ENCODE measurements at regions of chr11 and their contacts with region 1.

Region 1: DNA sequence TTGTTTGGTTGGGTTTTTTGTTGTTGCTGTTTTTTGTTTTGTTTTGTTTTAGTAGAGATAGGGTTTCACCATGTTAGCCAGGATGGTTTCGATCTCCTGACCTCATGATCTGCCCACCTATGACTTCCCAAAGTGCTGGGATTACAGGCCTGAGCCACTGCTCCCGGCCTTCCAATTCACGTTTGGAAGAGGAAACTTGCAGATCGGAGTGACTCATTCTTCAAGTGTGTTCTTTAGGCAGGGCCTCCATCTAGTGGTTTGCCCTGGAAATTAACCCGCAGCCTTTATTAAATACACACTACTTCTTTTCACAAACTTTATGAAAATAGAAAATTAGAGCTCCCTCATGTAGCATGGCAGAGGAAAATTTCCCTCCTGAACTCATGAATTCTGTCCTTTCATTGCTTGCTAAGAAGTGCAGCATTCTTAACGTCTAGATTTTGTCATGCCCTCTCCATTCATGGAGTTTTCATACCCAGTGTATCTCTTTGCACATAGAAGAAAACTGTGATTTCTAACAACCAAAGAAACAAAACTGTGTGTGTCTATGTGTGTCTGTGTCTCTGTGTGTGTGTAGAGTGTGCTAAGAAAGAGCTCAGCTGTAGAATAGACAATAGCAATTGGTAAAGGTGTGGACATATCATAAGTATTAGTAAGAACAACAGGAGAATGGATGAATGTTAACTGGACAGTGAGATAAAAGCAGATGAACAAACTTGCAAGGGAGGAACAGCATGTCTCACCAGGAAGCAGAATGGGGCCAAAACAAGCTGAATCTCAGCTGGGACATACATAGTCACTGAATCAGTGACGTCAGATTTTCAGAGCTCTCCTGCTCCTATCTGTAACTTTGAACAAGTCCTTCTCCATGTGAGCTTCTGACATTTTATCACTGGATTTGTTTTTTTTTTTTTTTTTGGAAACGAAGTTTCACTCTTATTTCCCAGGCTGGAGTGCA is 118.4 kb downstream of the BBOX1 start:
- DNase-seq: peak; percentile 12 to 23
- ATAC-seq: peak; percentile 86 to 94
- H3K4me3 ChIP-seq: no peak overlapping the region
- H3K27ac ChIP-seq: no peak overlapping the region
- H3K4me1 ChIP-seq: no peaks in the 10 kb centered on the region
- H3K27me3 ChIP-seq: no peaks in the 10 kb centered on the region
- CTCF ChIP-seq: peak; percentile 67 to 77 (median 76)
- POLR2A ChIP-seq: no peak

Region 2: GRCh38 chr11:26227296-26227695 is 931.7 kb before region 1 on chr11:
- in situ Hi-C with region 1: no loop called
- intact Hi-C with region 1: no loop called
- DNase-seq: no peak
- ATAC-seq: no peak
- H3K4me3 ChIP-seq: no peak overlapping the region
- H3K27ac ChIP-seq: no peak overlapping the region
- H3K4me1 ChIP-seq: no peaks in the 10 kb centered on the region
- H3K27me3 ChIP-seq: no peaks in the 10 kb centered on the region
- CTCF ChIP-seq: peak in 4 of 5 experiments; percentile 29 to 42 (median 38)
- POLR2A ChIP-seq: no peak

Region 3: DNA sequence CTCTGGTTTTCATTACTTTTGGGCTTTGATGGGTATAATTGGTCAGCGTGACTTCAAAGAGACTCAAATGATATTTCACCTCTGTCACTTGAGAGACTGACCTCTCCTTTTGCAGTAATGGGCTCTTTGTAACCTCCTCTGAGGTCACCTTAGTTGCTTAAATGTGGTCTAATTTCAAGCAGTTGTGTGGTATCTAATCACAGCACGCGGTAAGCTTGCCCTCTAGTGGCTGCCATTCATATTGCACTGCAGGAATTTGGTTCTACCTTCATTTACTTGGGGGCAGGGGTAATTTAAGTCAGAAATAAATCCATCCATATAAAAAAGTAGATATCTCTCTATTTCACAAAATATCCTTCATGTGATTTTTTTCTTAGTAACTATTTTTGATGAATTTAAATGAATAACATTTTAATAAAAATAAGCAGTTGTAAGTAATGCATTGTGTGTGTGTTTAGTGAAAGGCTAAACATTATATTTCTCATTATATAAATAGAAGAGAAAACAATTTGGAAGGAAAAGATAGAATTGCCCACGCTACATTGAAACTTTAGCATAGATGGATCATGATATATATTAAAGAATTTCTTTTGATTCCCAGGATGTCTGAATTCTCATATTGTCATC is 882.1 kb before region 1 on chr11:
- in situ Hi-C with region 1: loop called in 2 of 4 experiments (anchors 25 kb)
- intact Hi-C with region 1: no loop called
- DNase-seq: peak in 1 of 2 donors; percentile 18
- ATAC-seq: peak in 1 of 2 donors; percentile 53
- H3K4me3 ChIP-seq: no peak overlapping the region
- H3K27ac ChIP-seq: no peak overlapping the region
- H3K4me1 ChIP-seq: no peaks in the 10 kb centered on the region
- H3K27me3 ChIP-seq: no peaks in the 10 kb centered on the region
- CTCF ChIP-seq: peak; percentile 68 to 90 (median 70)
- POLR2A ChIP-seq: no peak

Region 4: GRCh38 chr11:26297189-26297975 is 861.6 kb before region 1 on chr11:
- in situ Hi-C with region 1: loop called in 2 of 4 experiments (anchors 25 kb)
- intact Hi-C with region 1: loop called (anchors 2 kb)
- DNase-seq: no peak
- ATAC-seq: no peak
- H3K4me3 ChIP-seq: no peak overlapping the region
- H3K27ac ChIP-seq: no peak overlapping the region
- H3K4me1 ChIP-seq: no peaks in the 10 kb centered on the region
- H3K27me3 ChIP-seq: no peaks in the 10 kb centered on the region
- CTCF ChIP-seq: peak in 4 of 5 experiments; percentile 19 to 40 (median 39)
- POLR2A ChIP-seq: no peak

Region 5: DNA sequence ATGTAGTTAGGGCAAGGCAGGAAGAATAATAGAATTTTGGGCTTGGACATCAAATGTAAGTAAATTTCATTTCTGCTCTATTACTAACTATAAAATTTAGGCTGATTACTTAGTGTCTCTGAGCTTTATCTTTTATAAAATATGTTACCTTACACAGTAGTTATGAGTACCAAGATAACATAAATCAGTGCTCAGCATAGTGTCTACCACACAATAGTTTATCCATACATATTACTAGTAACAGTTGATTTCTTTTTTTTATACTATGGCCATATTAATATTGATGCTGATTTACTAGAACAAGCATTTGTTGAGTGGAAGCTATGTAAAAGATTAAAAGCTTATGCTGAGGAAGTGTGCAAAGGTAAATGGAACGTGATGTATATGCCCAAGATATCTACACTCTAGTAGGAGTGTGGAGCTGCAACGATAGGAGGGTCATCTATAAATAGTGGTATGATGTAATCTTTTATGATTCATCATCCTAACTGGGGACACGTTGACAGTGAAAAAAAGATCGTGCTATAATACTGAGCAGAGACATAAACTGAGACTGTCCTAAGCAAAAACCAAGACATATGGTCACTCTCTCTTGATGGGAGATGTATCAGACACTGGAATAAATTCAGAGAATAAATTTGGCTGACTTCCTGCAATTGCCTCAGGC is 428.5 kb before region 1 on chr11:
- in situ Hi-C with region 1: loop called in 1 of 4 experiments (anchors 25 kb)
- intact Hi-C with region 1: no loop called
- DNase-seq: no peak
- ATAC-seq: peak; percentile 99 to 100
- H3K4me3 ChIP-seq: no peak overlapping the region
- H3K27ac ChIP-seq: no peak overlapping the region
- H3K4me1 ChIP-seq: peaks cover 6 to 7% of the 10 kb centered on the region in 2 donors
- H3K27me3 ChIP-seq: no peaks in the 10 kb centered on the region
- CTCF ChIP-seq: no peak
- POLR2A ChIP-seq: no peak

Region 6: GRCh38 chr11:26753723-26754504 is 405.1 kb before region 1 on chr11:
- in situ Hi-C with region 1: loop called in 3 of 4 experiments (anchors 5 to 25 kb)
- intact Hi-C with region 1: loop called (anchors 1 kb)
- DNase-seq: peak; percentile 12 to 30
- ATAC-seq: peak; percentile 85 to 86
- H3K4me3 ChIP-seq: no peak overlapping the region
- H3K27ac ChIP-seq: no peak overlapping the region
- H3K4me1 ChIP-seq: no peaks in the 10 kb centered on the region
- H3K27me3 ChIP-seq: no peaks in the 10 kb centered on the region
- CTCF ChIP-seq: peak; percentile 55 to 72 (median 69)
- POLR2A ChIP-seq: no peak

Region 7: DNA sequence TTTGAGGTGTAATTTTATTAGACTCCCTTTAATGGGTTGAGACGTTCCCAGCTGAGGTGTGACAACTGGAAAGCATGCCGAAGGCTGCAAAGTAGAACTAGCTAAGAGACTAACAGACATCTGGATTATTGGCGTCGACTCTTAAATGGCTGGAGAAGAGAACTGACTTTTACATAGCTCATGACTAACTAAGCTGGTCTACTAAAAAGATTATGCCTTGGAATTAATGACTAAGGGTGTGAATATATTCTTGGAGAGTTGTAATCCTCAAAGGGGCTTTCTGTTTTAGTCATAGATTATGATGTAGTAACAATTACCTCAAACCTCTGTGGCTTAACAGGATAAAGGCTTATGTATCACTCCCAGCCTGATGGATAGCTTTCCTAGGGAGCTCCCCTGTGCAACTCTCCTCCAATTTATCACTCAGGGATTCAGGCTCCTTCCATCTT is 397.6 kb before region 1 on chr11:
- in situ Hi-C with region 1: loop called in 3 of 4 experiments (anchors 5 to 10 kb)
- intact Hi-C with region 1: no loop called
- DNase-seq: no peak
- ATAC-seq: no peak
- H3K4me3 ChIP-seq: no peak overlapping the region
- H3K27ac ChIP-seq: no peak overlapping the region
- H3K4me1 ChIP-seq: no peaks in the 10 kb centered on the region
- H3K27me3 ChIP-seq: no peaks in the 10 kb centered on the region
- CTCF ChIP-seq: no peak
- POLR2A ChIP-seq: no peak

Region 8: GRCh38 chr11:26806219-26806618 is 352.8 kb before region 1 on chr11:
- in situ Hi-C with region 1: no loop called
- intact Hi-C with region 1: no loop called
- DNase-seq: no peak
- ATAC-seq: no peak
- H3K4me3 ChIP-seq: no peak overlapping the region
- H3K27ac ChIP-seq: no peak overlapping the region
- H3K4me1 ChIP-seq: no peaks in the 10 kb centered on the region
- H3K27me3 ChIP-seq: no peaks in the 10 kb centered on the region
- CTCF ChIP-seq: no peak
- POLR2A ChIP-seq: no peak

Region 9: DNA sequence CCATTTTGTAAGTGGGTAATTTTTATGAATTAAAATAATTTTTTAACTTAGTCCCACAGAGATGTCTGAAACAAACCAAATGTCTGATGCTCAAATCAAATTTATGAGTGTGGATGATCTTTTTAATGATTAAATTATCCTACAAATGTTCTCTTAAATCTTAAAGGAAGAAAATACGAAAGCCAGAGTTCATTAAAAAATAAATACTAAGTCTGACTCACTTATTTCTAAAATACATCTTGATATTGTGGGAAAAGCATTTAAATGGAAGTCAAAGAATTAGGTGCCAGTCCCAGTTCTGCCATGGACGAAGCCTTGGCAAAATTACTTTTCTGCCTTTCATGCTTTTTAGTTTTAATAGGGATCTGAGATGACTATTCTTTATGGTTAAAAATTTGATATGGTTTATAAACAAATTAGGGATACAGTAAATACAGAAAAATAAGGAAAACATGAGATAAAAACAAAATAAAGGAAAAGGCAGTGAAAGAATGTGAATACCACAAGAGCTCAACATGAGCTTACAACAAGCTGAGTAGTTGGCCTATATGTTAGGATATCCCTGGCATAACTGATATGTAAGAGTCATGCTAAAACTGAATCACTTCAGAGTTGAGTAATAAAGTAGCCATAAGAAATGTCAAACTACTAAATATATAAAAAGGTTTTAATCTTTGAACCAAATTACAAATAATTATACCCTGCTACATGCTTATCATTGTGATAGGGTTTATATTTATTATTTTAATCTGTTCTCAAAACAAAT is 194.8 kb after region 1 on chr11:
- in situ Hi-C with region 1: no loop called
- intact Hi-C with region 1: no loop called
- DNase-seq: no peak
- ATAC-seq: peak; percentile 42 to 43
- H3K4me3 ChIP-seq: no peak overlapping the region
- H3K27ac ChIP-seq: no peak overlapping the region
- H3K4me1 ChIP-seq: no peaks in the 10 kb centered on the region
- H3K27me3 ChIP-seq: no peaks in the 10 kb centered on the region
- CTCF ChIP-seq: no peak
- POLR2A ChIP-seq: no peak

Measured in gastrocnemius medialis (tissue), 4 donors.